Vagina (tissue), 2 donors: ENCODE measurements at regions of chr5 and their contacts with region 1.

Region 1: GRCh38 chr5:52787600-52788504 is at the starts of genes ITGA1 and PELO:
- DNase-seq: peak in 1 of 2 donors; percentile 92
- H3K4me3 ChIP-seq: peak within 1 kb of the TSS; percentile 60 to 67
- H3K27ac ChIP-seq: peak within 1 kb of the TSS; percentile 89
- H3K4me1 ChIP-seq: peaks cover 11% of the 10 kb centered on the region
- H3K27me3 ChIP-seq: no peaks in the 10 kb centered on the region
- CTCF ChIP-seq: peak in 1 of 3 experiments; percentile 9
- POLR2A ChIP-seq: peak in 1 of 2 donors; percentile 29
- total RNA-seq, gene ITGA1: 42.7 TPM
- total RNA-seq, gene PELO: 11.8 TPM

Region 2: GRCh38 chr5:52915176-52915875 is 127.5 kb after region 1 on chr5:
- intact Hi-C with region 1: loop called (anchors 5 kb)
- DNase-seq: no peak
- H3K4me3 ChIP-seq: peak overlapping the region in 1 of 2 donors; percentile 17
- H3K27ac ChIP-seq: no peak overlapping the region
- H3K4me1 ChIP-seq: no peaks in the 10 kb centered on the region
- H3K27me3 ChIP-seq: no peaks in the 10 kb centered on the region
- CTCF ChIP-seq: peak; percentile 56 to 80 (median 67)
- POLR2A ChIP-seq: no peak